Activated CD4-positive, alpha-beta T cell treated with anti-CD3 and anti-CD28 coated beads, Interleukin-2, amount 10 ng/mL, durations not matched to agents 24 days and 14 days (primary cell): ENCODE measurements at regions of chr2 and their contacts with region 1.

Region 1: DNA sequence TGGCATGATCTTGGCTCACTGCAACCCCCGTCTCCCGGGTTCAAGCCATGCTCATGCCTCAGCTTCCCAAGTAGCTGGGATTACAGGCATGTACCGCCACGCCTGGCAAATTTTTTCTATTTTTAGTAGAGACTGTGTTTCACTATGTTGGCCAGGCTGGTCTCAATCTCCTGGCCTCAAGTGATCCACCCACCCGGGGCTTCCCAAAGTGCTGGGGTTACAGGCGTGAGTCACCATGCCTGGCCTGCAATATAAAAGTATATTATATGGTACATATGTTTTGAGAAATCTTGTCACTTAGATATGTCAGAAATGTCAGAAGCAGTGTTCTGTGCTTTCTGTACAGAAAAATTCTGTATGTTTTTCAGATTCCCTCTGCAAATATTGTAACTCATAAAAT is 19.2 kb upstream of the XPO1 start:
- DNase-seq: no peak
- H3K4me3 Mint-ChIP-seq: no peak overlapping the region
- H3K27ac Mint-ChIP-seq: no peak overlapping the region
- H3K4me1 Mint-ChIP-seq: no peaks in the 10 kb centered on the region
- H3K27me3 Mint-ChIP-seq: peaks cover 6% of the 10 kb centered on the region

Region 2: DNA sequence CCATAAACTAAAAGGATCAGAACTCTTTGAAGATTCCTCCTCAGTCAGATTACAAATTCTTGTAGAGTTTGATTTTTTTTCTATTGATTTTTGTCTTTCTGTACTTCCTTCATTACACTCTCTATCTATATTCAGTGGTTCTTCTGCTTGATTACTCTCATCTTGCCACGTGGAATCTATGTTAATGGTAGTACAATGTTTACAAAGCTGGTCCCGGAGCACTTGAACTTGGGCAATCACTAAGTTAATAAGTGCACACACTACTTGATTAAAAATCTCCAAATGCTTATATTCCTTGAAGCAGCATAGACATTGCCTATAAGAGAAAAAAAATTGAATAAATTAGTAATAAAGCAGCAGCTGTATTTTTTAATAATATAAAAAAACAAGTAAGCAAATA is 151.6 kb before region 1 on chr2:
- intact Hi-C with region 1: no loop called
- DNase-seq: no peak
- H3K4me3 Mint-ChIP-seq: no peak overlapping the region
- H3K27ac Mint-ChIP-seq: peak overlapping the region; percentile 1
- H3K4me1 Mint-ChIP-seq: peaks cover 5% of the 10 kb centered on the region
- H3K27me3 Mint-ChIP-seq: no peaks in the 10 kb centered on the region

Region 3: GRCh38 chr2:61575447-61575859 is 18.1 kb after region 1 on chr2:
- intact Hi-C with region 1: loop called (anchors 1 kb)
- DNase-seq: no peak
- H3K4me3 Mint-ChIP-seq: peak overlapping the region; percentile 3
- H3K27ac Mint-ChIP-seq: peak overlapping the region; percentile 64
- H3K4me1 Mint-ChIP-seq: peaks cover 9% of the 10 kb centered on the region
- H3K27me3 Mint-ChIP-seq: no peaks in the 10 kb centered on the region

Region 4: GRCh38 chr2:61620244-61621159 is 63.1 kb after region 1 on chr2:
- intact Hi-C with region 1: no loop called
- DNase-seq: no peak
- H3K4me3 Mint-ChIP-seq: no peak overlapping the region
- H3K27ac Mint-ChIP-seq: no peak overlapping the region
- H3K4me1 Mint-ChIP-seq: no peaks in the 10 kb centered on the region
- H3K27me3 Mint-ChIP-seq: no peaks in the 10 kb centered on the region

Region 5: DNA sequence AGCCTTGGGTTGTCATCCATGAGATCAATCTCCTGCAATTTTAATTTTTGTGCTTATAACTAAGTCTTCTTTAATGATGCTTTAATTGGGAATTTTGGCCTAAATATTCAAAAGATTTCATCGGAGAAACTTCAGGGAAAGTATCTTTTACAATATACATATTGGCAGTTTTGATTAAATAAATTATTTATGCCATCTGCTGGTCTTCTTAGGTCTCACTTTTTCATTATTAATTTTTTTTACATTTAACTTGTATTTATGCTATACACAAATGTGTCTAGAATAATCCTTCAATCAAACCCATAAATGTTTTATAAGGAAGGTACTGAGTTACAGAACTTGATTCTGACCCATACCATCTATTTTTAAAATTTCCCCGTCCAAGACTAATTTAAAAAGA is 75.9 kb after region 1 on chr2:
- intact Hi-C with region 1: no loop called
- DNase-seq: no peak
- H3K4me3 Mint-ChIP-seq: no peak overlapping the region
- H3K27ac Mint-ChIP-seq: no peak overlapping the region
- H3K4me1 Mint-ChIP-seq: no peaks in the 10 kb centered on the region
- H3K27me3 Mint-ChIP-seq: peaks cover 2% of the 10 kb centered on the region